ENCODE measurements at regions of chr7 and their contacts with region 1.

Region 1: GRCh38 chr7:142880876-142881505 is 4.6 kb downstream of the TRPV6 start:
- DNase-seq: peak; percentile 34 to 70 (median 61)
- H3K4me3 ChIP-seq: no peak overlapping the region
- H3K27ac ChIP-seq: no peak overlapping the region
- H3K4me1 ChIP-seq: no peaks in the 10 kb centered on the region
- H3K27me3 ChIP-seq: peaks cover 0 to 6% (median 0%) of the 10 kb centered on the region in 5 experiments

Region 2: GRCh38 chr7:142866361-142867058 is 14.5 kb before region 1 on chr7:
- CTCF ChIA-PET with region 1: interaction called, 29 read pairs
- POLR2A ChIA-PET with region 1: no interaction called
- DNase-seq: no peak
- H3K4me3 ChIP-seq: no peak overlapping the region
- H3K27ac ChIP-seq: no peak overlapping the region
- H3K4me1 ChIP-seq: peaks cover 0 to 16% (median 15%) of the 10 kb centered on the region in 4 experiments
- H3K27me3 ChIP-seq: no peaks in the 10 kb centered on the region

Region 3: GRCh38 chr7:142898377-142899170 is 17.6 kb after region 1 on chr7:
- CTCF ChIA-PET with region 1: interaction called, 11 read pairs
- POLR2A ChIA-PET with region 1: no interaction called
- DNase-seq: no peak
- H3K4me3 ChIP-seq: no peak overlapping the region
- H3K27ac ChIP-seq: no peak overlapping the region
- H3K4me1 ChIP-seq: no peaks in the 10 kb centered on the region
- H3K27me3 ChIP-seq: peaks cover 0 to 2% (median 0%) of the 10 kb centered on the region in 5 experiments

Region 4: GRCh38 chr7:143214789-143215679 is 334.0 kb after region 1 on chr7:
- CTCF ChIA-PET with region 1: interaction called, 21 read pairs
- POLR2A ChIA-PET with region 1: no interaction called
- DNase-seq: peak; percentile 85 to 93 (median 87)
- H3K4me3 ChIP-seq: no peak overlapping the region
- H3K27ac ChIP-seq: no peak overlapping the region
- H3K4me1 ChIP-seq: no peaks in the 10 kb centered on the region
- H3K27me3 ChIP-seq: peaks cover 0 to under 1% (median 0%) of the 10 kb centered on the region in 5 experiments